GM12878 (cell line): ENCODE measurements at regions of chr12 and their contacts with region 1.

Region 1: DNA sequence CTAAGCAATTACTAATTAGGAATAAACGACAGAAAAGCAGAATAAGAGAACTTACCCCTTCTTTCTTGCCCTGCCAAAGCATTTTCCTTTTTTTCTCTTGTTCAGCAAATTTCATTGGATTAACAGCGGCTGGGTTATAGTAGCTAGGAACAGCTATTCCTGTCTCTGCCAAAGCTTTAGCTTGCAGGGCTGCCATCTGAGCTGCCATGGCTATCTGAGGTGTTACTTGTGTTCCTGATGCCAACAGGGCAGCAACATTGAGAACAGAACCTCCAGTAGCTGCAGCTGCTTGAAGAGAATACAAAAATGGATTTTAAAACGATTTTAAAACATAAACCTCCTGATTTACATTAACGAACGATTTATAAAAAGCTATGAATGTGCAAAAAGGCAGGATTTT is 7.4 kb upstream of the ZCCHC8 start:
- DNase-seq: no peak
- ATAC-seq: no peak
- H3K4me3 ChIP-seq: no peak overlapping the region
- H3K27ac ChIP-seq: no peak overlapping the region
- H3K4me1 ChIP-seq: no peaks in the 10 kb centered on the region
- H3K27me3 ChIP-seq: no peaks in the 10 kb centered on the region
- CTCF ChIP-seq: no peak
- EP300 ChIP-seq: no peak
- POLR2A ChIP-seq: no peak
- RAD21 ChIP-seq: no peak

Region 2: GRCh38 chr12:122526683-122527477 is 18.7 kb after region 1 on chr12 and contains the starts of genes KNTC1 and RSRC2:
- CTCF ChIA-PET with region 1: interaction called, 5 read pairs
- POLR2A ChIA-PET with region 1: interaction called, 3 read pairs
- RAD21 ChIA-PET with region 1: interaction called, 3 read pairs
- SMC1A ChIA-PET with region 1: interaction called, 34 read pairs
- in situ Hi-C with region 1: no loop called
- intact Hi-C with region 1: loop called (anchors 2 kb)
- DNase-seq: peak; percentile 99
- ATAC-seq: peak; percentile 86
- H3K4me3 ChIP-seq: peak within 1 kb of the TSS; percentile 96
- H3K27ac ChIP-seq: peak within 1 kb of the TSS; percentile 99
- H3K4me1 ChIP-seq: peaks cover 28% of the 10 kb centered on the region
- H3K27me3 ChIP-seq: no peaks in the 10 kb centered on the region
- CTCF ChIP-seq: no peak
- EP300 ChIP-seq: no peak
- POLR2A ChIP-seq: peak; percentile 99
- RAD21 ChIP-seq: no peak
- polyA plus RNA-seq, gene KNTC1: 37.2 to 38.3 TPM
- polyA plus RNA-seq, gene RSRC2: 49.8 to 52.3 TPM